Naive thymus-derived CD4-positive, alpha-beta T cell (primary cell): ENCODE measurements at regions of chr20 and their contacts with region 1.

Region 1: GRCh38 chr20:58650776-58651558 is at the start of gene STX16:
- DNase-seq: peak; percentile 76 to 87 (median 84)
- ATAC-seq: peak; percentile 83
- H3K4me3 ChIP-seq: peak within 1 kb of the TSS; percentile 94
- H3K4me3 Mint-ChIP-seq: peak within 1 kb of the TSS; percentile 94 to 100 (median 98)
- H3K27ac ChIP-seq: peak within 1 kb of the TSS; percentile 93
- H3K27ac Mint-ChIP-seq: peak within 1 kb of the TSS; percentile 97 to 100 (median 99)
- H3K4me1 ChIP-seq: peaks cover 24 to 32% of the 10 kb centered on the region in 2 donors
- H3K4me1 Mint-ChIP-seq: peaks cover 14 to 35% (median 28%) of the 10 kb centered on the region in 7 donors
- H3K27me3 ChIP-seq: no peaks in the 10 kb centered on the region
- H3K27me3 Mint-ChIP-seq: peaks cover 0 to 4% (median 0%) of the 10 kb centered on the region in 5 donors
- total RNA-seq, gene STX16: 173 to 225 (median 189) TPM

Region 2: DNA sequence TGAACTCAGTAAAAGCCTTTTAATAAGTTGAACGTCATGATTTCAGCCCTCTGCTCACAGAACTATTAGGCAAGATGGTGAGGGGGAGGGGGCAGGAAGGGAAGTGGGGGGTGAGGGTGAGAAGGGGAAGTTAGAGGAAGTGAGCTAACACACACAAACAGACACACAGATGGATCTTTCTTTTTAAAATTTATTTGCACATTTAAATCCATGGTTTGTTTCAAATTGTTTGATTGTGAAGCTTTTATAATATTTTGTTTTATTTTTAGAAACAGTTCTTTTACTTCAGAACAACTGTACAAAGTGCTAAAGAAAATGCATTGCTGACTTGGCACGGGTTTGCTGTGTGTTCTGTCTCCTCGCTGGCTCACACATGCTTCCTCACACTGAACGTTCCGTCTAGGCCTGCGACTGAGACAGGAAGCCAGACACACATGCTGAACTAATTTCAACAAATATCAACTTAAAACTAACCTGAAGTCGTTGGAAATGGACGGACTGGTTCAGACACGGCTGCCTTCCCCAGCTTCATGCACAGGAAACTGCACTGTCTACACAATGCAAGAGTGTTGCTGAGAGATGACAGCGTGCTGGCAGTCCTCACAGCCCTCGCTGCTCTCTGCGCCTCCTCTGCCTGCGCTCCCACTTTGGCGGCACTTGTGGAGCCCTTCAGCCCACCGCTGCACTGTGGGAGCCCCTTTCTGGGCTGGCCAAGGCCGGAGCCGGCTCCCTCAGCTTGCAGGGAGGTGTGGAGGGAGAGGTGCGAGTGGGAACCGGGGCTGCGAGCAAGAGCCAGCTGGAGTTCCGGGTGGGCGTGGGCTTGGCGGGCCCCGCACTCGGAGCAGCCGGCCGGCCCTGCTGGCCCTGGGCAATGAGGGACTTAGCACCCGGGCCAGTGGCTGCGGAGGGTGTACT is 1022.7 kb before region 1 on chr20:
- CTCF ChIA-PET with region 1: no interaction called
- POLR2A ChIA-PET with region 1: interaction called, 3 read pairs
- intact Hi-C with region 1: loop called in 1 of 2 experiments (anchors 5 kb)
- DNase-seq: peak in 7 of 9 donors; percentile 62 to 81 (median 71)
- ATAC-seq: peak; percentile 88
- H3K4me3 ChIP-seq: peak overlapping the region; percentile 49
- H3K4me3 Mint-ChIP-seq: peak overlapping the region; percentile 85 to 97 (median 91)
- H3K27ac ChIP-seq: peak overlapping the region; percentile 83
- H3K27ac Mint-ChIP-seq: peak overlapping the region; percentile 92 to 100 (median 98)
- H3K4me1 ChIP-seq: peaks cover 41 to 51% of the 10 kb centered on the region in 2 donors
- H3K4me1 Mint-ChIP-seq: peaks cover 38 to 94% (median 80%) of the 10 kb centered on the region in 7 donors
- H3K27me3 ChIP-seq: no peaks in the 10 kb centered on the region
- H3K27me3 Mint-ChIP-seq: peaks cover 0 to 53% (median 0%) of the 10 kb centered on the region in 5 donors

Region 3: DNA sequence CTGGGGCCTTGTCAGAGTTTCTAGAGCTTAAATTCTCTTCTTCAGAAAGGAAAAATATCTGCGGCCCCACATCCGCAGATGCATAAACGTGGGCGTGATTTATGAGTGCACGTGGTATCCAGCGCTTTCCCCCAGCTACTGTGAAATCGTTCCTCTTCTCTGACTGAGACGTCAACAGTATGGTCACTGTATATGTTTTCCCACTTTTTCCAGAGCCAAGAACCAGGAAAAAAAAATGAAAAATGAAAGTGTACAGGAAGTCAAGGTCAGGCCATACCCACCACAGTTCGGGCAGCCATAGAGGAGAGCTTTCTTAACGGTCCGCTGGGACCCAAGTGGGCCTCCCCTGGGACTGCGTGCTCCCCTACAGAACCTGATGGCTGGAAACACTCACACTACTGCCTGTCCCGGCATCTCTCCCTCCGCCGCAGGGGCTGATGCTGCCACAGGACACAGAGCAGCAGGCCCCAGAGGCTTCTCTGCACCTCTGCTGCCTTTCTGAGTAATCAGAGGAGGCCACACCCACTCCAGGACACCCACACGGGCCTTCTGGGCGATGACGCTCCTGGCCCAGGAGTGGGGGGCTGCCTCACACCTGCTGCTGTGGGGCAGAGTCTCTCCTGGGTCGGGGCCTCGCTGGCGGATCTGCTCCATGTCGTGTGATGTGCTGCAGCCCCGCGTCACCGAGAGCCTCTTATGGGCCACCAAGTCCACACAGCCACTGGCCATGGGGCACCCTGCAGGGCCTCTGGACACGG is 16.3 kb before region 1 on chr20:
- CTCF ChIA-PET with region 1: interaction called, 3 read pairs
- POLR2A ChIA-PET with region 1: interaction called, 11 read pairs
- intact Hi-C with region 1: no loop called
- DNase-seq: peak in 8 of 9 donors; percentile 21 to 48 (median 40)
- ATAC-seq: peak; percentile 70
- H3K4me3 ChIP-seq: no peak overlapping the region
- H3K4me3 Mint-ChIP-seq: peak overlapping the region; percentile 16 to 78 (median 72)
- H3K27ac ChIP-seq: peak overlapping the region; percentile 67
- H3K27ac Mint-ChIP-seq: peak overlapping the region in 8 of 9 donors; percentile 58 to 96 (median 88)
- H3K4me1 ChIP-seq: peaks cover 4 to 15% of the 10 kb centered on the region in 2 donors
- H3K4me1 Mint-ChIP-seq: peaks cover 6 to 38% (median 17%) of the 10 kb centered on the region in 7 donors
- H3K27me3 ChIP-seq: no peaks in the 10 kb centered on the region
- H3K27me3 Mint-ChIP-seq: peaks cover 0 to 10% (median 0%) of the 10 kb centered on the region in 5 donors

Region 4: DNA sequence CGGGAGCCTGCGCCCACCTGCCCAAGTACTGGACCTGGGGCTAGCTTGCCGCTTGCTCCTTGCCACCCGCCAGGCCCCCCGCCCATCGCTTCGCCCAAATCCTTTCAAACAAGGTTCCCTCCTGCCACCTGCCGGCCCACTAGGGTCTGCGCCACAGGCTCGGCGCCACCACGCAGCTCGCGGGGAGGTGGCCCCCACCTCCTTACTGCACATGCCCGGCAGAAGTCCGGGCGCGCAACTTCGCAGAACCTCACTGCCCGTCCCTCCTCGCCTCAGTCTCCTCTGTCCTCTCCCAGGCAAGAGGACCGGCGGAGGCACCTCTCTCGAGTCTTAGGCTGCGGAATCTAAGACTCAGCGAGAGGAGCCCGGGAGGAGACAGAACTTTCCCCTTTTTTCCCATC is 188.5 kb after region 1 on chr20:
- CTCF ChIA-PET with region 1: interaction called, 11 read pairs
- POLR2A ChIA-PET with region 1: no interaction called
- intact Hi-C with region 1: loop called (anchors 1 kb)
- DNase-seq: peak in 8 of 9 donors; percentile 18 to 51 (median 38)
- ATAC-seq: peak; percentile 72
- H3K4me3 ChIP-seq: no peak overlapping the region
- H3K4me3 Mint-ChIP-seq: peak overlapping the region in 8 of 10 donors; percentile 14 to 70 (median 54)
- H3K27ac ChIP-seq: no peak overlapping the region
- H3K27ac Mint-ChIP-seq: no peak overlapping the region
- H3K4me1 ChIP-seq: no peaks in the 10 kb centered on the region
- H3K4me1 Mint-ChIP-seq: peaks cover 0 to 10% (median 0%) of the 10 kb centered on the region in 7 donors
- H3K27me3 ChIP-seq: peaks cover 0 to 4% of the 10 kb centered on the region in 2 donors
- H3K27me3 Mint-ChIP-seq: peaks cover 33 to 84% (median 46%) of the 10 kb centered on the region in 5 donors

Region 5: DNA sequence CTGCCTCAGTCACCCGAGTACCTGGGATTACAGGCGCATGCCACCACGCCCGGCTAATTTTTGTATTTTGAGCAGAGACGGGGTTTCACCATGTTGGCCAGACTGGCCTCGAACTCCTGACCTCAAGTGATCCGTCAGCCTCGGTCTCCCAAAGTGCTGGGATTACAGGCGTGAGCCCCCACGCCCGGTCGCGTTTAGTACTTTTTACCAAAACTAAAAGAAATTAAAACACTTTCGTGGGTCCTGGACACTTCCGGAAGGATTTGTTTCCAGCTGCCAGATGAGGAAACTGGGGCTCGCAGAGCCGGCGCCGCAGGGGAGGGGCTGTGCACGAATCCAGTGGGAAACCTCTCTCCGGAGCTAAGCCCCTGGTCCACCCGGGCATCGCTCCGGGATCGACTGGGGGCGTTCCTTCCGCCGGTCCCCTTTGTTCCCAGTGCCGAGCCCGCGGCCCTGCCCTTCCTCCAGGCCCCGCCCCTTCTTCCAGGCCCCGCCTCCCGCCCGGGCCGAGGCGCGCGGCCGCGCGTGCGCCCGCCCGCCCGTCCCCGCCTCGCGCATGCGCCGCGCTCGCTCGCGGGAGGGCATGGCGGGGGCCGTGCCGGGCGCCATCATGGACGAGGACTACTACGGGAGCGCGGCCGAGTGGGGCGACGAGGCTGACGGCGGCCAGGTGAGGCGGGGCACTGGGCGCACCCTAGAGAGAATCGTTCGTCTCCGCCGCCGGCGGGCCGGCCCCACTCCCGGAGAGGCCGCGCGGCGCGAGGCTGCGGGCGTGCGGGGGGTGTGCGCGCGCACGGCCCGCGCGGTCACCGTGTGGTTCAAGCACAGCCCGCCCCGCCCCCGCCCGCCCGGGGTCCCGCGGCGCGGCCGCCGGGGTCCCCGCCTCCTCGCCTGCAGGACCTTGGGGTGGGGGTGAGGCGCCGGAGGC is 330.0 kb after region 1 on chr20 and contains the start of gene NELFCD:
- CTCF ChIA-PET with region 1: no interaction called
- POLR2A ChIA-PET with region 1: no interaction called
- intact Hi-C with region 1: loop called (anchors 1 to 2 kb)
- DNase-seq: peak; percentile 78 to 96 (median 88)
- ATAC-seq: peak; percentile 97
- H3K4me3 ChIP-seq: peak within 1 kb of the TSS; percentile 91
- H3K4me3 Mint-ChIP-seq: peak within 1 kb of the TSS; percentile 86 to 97 (median 94)
- H3K27ac ChIP-seq: peak within 1 kb of the TSS; percentile 88
- H3K27ac Mint-ChIP-seq: peak within 1 kb of the TSS; percentile 77 to 98 (median 90)
- H3K4me1 ChIP-seq: peaks cover 24% of the 10 kb centered on the region in 2 donors
- H3K4me1 Mint-ChIP-seq: peaks cover 26 to 41% (median 32%) of the 10 kb centered on the region in 7 donors
- H3K27me3 ChIP-seq: no peaks in the 10 kb centered on the region
- H3K27me3 Mint-ChIP-seq: peaks cover 0 to 9% (median 0%) of the 10 kb centered on the region in 5 donors
- total RNA-seq, gene NELFCD: 84.5 to 96.1 (median 90.8) TPM

Region 6: GRCh38 chr20:59159493-59160376 is 508.8 kb after region 1 on chr20:
- CTCF ChIA-PET with region 1: no interaction called
- POLR2A ChIA-PET with region 1: no interaction called
- intact Hi-C with region 1: loop called (anchors 2 to 5 kb)
- DNase-seq: peak in 8 of 9 donors; percentile 50 to 86 (median 82)
- ATAC-seq: peak; percentile 93
- H3K4me3 ChIP-seq: peak overlapping the region; percentile 55
- H3K4me3 Mint-ChIP-seq: peak overlapping the region; percentile 76 to 93 (median 89)
- H3K27ac ChIP-seq: peak overlapping the region; percentile 93
- H3K27ac Mint-ChIP-seq: peak overlapping the region; percentile 95 to 99 (median 98)
- H3K4me1 ChIP-seq: peaks cover 55 to 79% of the 10 kb centered on the region in 2 donors
- H3K4me1 Mint-ChIP-seq: peaks cover 49 to 95% (median 89%) of the 10 kb centered on the region in 7 donors
- H3K27me3 ChIP-seq: no peaks in the 10 kb centered on the region
- H3K27me3 Mint-ChIP-seq: no peaks in the 10 kb centered on the region